ENCODE measurements at regions of chrX and their contacts with region 1.

Region 1: GRCh38 chrX:110407910-110408545 is 49.4 kb downstream of the RTL9 start:
- DNase-seq: peak; percentile 23
- H3K4me3 Mint-ChIP-seq: no peak overlapping the region
- H3K27ac Mint-ChIP-seq: no peak overlapping the region
- H3K4me1 Mint-ChIP-seq: peaks cover 4% of the 10 kb centered on the region
- H3K27me3 Mint-ChIP-seq: no peaks in the 10 kb centered on the region

Region 2: GRCh38 chrX:110146521-110146920 is 261.5 kb before region 1 on chrX:
- CTCF ChIA-PET with region 1: interaction called, 18 read pairs
- POLR2A ChIA-PET with region 1: no interaction called
- DNase-seq: peak; percentile 22
- H3K4me3 Mint-ChIP-seq: no peak overlapping the region
- H3K27ac Mint-ChIP-seq: no peak overlapping the region
- H3K4me1 Mint-ChIP-seq: peaks cover 7% of the 10 kb centered on the region
- H3K27me3 Mint-ChIP-seq: no peaks in the 10 kb centered on the region

Region 3: DNA sequence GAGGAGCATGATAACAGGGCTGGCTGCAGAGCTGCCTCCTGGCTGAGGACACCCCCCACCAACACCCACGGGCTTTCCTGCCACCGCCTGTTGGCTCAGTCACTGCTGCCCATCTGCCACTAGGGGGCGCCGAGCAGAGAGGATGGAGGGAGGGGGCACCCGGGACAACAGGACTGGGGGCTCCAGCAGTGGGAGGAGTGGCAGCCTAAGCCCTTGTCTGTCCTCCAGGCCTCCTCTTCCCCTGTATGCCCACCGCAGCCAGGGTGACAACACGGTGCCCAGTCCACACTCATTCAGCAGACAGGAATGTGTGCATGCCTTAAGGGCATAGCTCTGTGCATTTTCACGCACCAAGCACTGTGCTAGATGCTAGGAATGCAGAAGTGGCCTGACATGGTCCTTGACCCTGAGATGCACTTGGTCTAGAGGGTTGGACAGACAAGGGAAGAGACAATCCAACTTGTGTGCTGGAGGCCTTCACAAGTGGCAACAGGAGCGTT is 240.0 kb before region 1 on chrX:
- CTCF ChIA-PET with region 1: interaction called, 28 read pairs
- POLR2A ChIA-PET with region 1: no interaction called
- DNase-seq: peak; percentile 54
- H3K4me3 Mint-ChIP-seq: no peak overlapping the region
- H3K27ac Mint-ChIP-seq: no peak overlapping the region
- H3K4me1 Mint-ChIP-seq: no peaks in the 10 kb centered on the region
- H3K27me3 Mint-ChIP-seq: no peaks in the 10 kb centered on the region

Region 4: DNA sequence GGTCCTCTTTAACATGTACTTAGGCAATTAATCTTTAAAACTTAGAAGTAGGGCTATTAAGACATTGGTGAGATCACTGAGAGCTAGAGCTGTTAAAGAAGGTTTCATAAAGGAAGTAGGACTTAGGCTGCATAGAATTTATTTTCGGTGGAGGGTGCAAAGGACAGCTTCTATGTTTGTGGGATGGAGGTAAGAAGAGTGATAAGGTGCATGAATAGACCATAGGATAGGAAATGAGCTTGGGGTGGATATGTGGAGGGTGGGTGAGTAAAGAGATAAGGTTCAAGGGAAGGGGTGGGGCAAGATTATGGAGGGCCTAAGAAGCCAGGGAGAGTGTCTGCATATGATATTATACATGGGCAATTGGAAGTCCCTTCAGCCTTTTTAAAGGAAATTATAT is 33.5 kb before region 1 on chrX:
- CTCF ChIA-PET with region 1: no interaction called
- POLR2A ChIA-PET with region 1: no interaction called
- DNase-seq: no peak
- H3K4me3 Mint-ChIP-seq: no peak overlapping the region
- H3K27ac Mint-ChIP-seq: no peak overlapping the region
- H3K4me1 Mint-ChIP-seq: peaks cover 3% of the 10 kb centered on the region
- H3K27me3 Mint-ChIP-seq: no peaks in the 10 kb centered on the region

Region 5: DNA sequence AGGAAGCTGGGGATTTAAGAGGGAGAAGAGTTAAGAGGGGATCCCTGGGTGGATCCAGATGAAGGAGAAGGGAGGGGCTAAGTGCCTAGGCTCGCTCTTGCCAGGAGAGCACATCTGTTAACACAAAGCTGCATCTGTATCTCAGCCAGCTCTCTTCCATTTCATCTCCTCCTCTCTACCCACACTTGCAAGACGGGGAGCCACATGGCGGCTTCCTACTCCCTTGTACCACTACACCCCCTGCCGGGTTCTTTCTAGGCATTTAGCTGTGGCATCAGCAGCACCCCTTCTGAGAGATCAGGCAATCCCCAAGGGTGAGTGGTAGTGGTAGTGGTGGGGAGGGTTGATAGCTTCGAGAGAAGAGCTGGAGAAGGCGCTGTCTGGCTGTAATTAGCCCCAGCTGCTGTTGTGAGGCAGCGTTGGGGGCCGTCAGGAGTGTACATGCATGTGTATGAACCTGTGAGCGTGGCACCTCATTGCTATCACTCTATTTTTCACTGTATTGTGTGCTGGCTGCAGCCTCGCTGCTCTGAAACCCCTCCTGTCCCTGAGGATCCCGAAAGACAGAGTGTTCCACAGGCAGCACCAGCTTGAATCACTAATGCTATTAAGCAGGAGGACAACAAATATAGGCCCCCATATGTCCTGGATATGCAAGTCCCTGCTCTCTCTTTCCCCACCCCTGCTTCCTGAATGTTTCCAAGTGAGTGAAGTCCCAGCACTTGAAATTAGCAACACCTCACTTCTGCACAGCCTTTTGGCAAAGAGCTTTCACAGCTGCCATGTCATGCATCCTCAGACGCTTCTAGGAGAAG is 24.3 kb after region 1 on chrX:
- CTCF ChIA-PET with region 1: no interaction called
- POLR2A ChIA-PET with region 1: no interaction called
- DNase-seq: no peak
- H3K4me3 Mint-ChIP-seq: no peak overlapping the region
- H3K27ac Mint-ChIP-seq: no peak overlapping the region
- H3K4me1 Mint-ChIP-seq: no peaks in the 10 kb centered on the region
- H3K27me3 Mint-ChIP-seq: peaks cover 4% of the 10 kb centered on the region

Measured in activated CD4-positive, alpha-beta memory T cell treated with anti-CD3 and anti-CD28 coated beads, Interleukin-2, amount 10 ng/mL, durations not matched to agents 7 days and 5 days (primary cell).